ENCODE measurements at regions of chr9 and their contacts with region 1.

Region 1: GRCh38 chr9:84953797-84954705 is 284.5 kb downstream of the NTRK2 start:
- DNase-seq: peak; percentile 74 to 86
- ATAC-seq: peak; percentile 60 to 88 (median 83)
- H3K4me3 ChIP-seq: no peak overlapping the region
- H3K27ac ChIP-seq: no peak overlapping the region
- H3K4me1 ChIP-seq: no peaks in the 10 kb centered on the region
- H3K27me3 ChIP-seq: peaks cover 0 to 3% (median 0%) of the 10 kb centered on the region in 3 donors
- CTCF ChIP-seq: peak; percentile 68

Region 2: DNA sequence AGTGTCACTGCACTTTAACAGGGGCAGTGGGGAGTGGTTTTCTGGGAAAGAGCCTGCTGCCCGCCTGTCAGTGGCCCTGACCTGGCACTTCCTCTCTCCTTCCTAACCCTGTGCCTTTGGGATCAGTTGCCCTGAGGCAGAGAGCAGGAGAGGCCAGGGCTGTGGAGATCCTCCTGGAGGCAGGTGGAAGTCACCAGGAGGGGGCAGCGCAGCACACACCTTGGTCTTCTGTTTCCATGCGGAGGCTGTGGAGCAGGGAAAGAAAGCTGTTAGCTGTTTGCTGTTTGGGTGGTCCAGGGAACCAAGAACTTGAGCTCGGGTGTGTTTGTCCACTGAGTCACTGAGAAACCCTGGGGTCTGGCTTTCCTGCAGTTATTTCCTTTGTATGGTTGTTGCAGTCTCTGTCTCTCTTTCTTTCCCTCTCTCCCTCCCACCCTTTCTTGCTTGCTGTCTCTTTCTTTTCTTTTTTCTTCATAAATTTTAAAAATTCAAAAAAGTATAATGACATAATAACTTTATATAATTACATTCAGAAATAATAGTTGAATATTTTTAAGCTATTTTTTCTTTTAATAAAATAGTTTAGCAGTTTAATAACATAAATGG is 256.4 kb before region 1 on chr9:
- intact Hi-C with region 1: loop called in 1 of 2 experiments (anchors 5 kb)
- DNase-seq: peak; percentile 64 to 80
- ATAC-seq: peak in 3 of 4 donors; percentile 57 to 77 (median 65)
- H3K4me3 ChIP-seq: no peak overlapping the region
- H3K27ac ChIP-seq: no peak overlapping the region
- H3K4me1 ChIP-seq: no peaks in the 10 kb centered on the region
- H3K27me3 ChIP-seq: no peaks in the 10 kb centered on the region
- CTCF ChIP-seq: peak; percentile 45

Region 3: GRCh38 chr9:85228111-85228855 is 274.2 kb after region 1 on chr9:
- intact Hi-C with region 1: no loop called
- DNase-seq: no peak
- ATAC-seq: no peak
- H3K4me3 ChIP-seq: no peak overlapping the region
- H3K27ac ChIP-seq: no peak overlapping the region
- H3K4me1 ChIP-seq: no peaks in the 10 kb centered on the region
- H3K27me3 ChIP-seq: no peaks in the 10 kb centered on the region
- CTCF ChIP-seq: no peak

Measured in psoas muscle (tissue), 8 donors.